HCT116 (cell line): ENCODE measurements at regions of chr11 and their contacts with region 1.

Region 1: GRCh38 chr11:74437441-74438042 is 29.8 kb downstream of the KCNE3 start:
- DNase-seq: no peak
- ATAC-seq: no peak
- H3K4me3 ChIP-seq: no peak overlapping the region
- H3K27ac ChIP-seq: no peak overlapping the region
- H3K4me1 ChIP-seq: no peaks in the 10 kb centered on the region
- H3K27me3 ChIP-seq: no peaks in the 10 kb centered on the region
- CTCF ChIP-seq: no peak
- POLR2A ChIP-seq: no peak
- RAD21 ChIP-seq: no peak

Region 2: DNA sequence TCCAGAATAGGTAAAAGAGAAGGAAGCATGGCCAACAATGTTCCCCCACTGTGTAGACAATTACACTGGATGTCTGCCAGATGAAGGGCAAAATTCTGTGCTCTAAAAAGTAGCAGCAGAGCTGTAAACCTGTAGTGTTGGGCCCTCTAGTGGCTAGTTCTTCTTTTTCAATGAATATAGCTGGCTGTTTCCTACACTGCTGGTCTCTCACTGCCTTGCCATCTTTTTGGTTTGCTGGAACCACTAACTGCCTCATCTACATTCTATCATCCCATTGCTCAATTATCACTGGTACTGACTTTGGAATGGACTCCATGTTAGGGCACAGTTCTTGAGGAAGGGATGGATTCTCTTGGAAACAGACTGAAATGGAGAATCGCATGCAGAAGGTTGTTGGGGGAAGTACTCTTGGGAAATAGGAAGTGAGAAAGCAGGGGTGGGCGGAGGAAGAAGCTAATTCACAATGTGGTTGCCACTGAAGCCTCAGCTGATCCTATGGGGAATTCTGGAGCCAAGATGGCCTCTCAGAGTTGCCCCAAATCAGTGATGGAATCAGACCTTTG is 11.9 kb after region 1 on chr11:
- CTCF ChIA-PET with region 1: interaction called, 12 read pairs
- POLR2A ChIA-PET with region 1: no interaction called
- RAD21 ChIA-PET with region 1: no interaction called
- intact Hi-C with region 1: no loop called
- DNase-seq: peak; percentile 57
- ATAC-seq: peak; percentile 82
- H3K4me3 ChIP-seq: no peak overlapping the region
- H3K27ac ChIP-seq: no peak overlapping the region
- H3K4me1 ChIP-seq: peaks cover 0 to 3% of the 10 kb centered on the region in 2 experiments; a peak in 1 of 4 replicates
- H3K27me3 ChIP-seq: no peaks in the 10 kb centered on the region
- CTCF ChIP-seq: peak; percentile 68 to 79 (median 74)
- POLR2A ChIP-seq: no peak
- RAD21 ChIP-seq: peak; percentile 96

Region 3: GRCh38 chr11:74492974-74493790 is 55.6 kb after region 1 on chr11 and contains the start of gene LIPT2:
- CTCF ChIA-PET with region 1: no interaction called
- POLR2A ChIA-PET with region 1: no interaction called
- RAD21 ChIA-PET with region 1: no interaction called
- intact Hi-C with region 1: no loop called
- DNase-seq: peak; percentile 96
- ATAC-seq: peak; percentile 97
- H3K4me3 ChIP-seq: peak within 1 kb of the TSS; percentile 44 to 74
- H3K27ac ChIP-seq: peak within 1 kb of the TSS; percentile 99
- H3K4me1 ChIP-seq: peaks cover 11 to 19% of the 10 kb centered on the region in 2 experiments
- H3K27me3 ChIP-seq: no peaks in the 10 kb centered on the region
- CTCF ChIP-seq: no peak
- POLR2A ChIP-seq: peak; percentile 81
- RAD21 ChIP-seq: no peak
- total RNA-seq, gene LIPT2: 3.4 TPM